Activated naive CD4-positive, alpha-beta T cell treated with anti-CD3 and anti-CD28 coated beads for 36 hours (primary cell): ENCODE measurements at regions of chr7 and their contacts with region 1.

Region 1: GRCh38 chr7:55515569-55516279 is 56.6 kb downstream of the VOPP1 start:
- DNase-seq: peak; percentile 56
- H3K4me3 Mint-ChIP-seq: peak overlapping the region; percentile 36
- H3K27ac Mint-ChIP-seq: peak overlapping the region; percentile 90
- H3K4me1 Mint-ChIP-seq: peaks cover 77% of the 10 kb centered on the region
- H3K27me3 Mint-ChIP-seq: no peaks in the 10 kb centered on the region

Region 2: DNA sequence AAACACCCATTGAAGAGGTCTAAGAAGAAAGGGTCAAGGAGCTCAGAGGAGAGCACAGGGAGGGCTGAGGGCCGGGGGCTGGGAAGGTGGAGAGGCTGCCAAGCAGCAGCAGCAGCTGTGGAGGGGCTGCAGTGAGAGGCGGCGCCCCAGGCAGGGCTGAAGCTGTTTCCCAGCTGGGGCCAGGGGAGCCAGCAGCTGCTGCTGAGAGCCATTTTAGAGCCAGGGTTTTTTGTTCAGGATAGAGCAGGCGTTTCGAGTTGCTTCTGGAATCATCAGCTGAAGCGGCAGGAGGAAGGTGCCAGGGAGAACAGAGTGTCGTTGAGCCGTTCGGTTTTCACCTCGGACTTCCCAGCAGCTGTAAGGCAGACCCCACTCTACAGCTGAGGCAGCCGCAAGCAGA is 87.9 kb before region 1 on chr7:
- CTCF ChIA-PET with region 1: no interaction called
- intact Hi-C with region 1: loop called (anchors 1 kb)
- DNase-seq: no peak
- H3K4me3 Mint-ChIP-seq: no peak overlapping the region
- H3K27ac Mint-ChIP-seq: peak overlapping the region; percentile 69
- H3K4me1 Mint-ChIP-seq: peaks cover 21% of the 10 kb centered on the region
- H3K27me3 Mint-ChIP-seq: no peaks in the 10 kb centered on the region

Region 3: DNA sequence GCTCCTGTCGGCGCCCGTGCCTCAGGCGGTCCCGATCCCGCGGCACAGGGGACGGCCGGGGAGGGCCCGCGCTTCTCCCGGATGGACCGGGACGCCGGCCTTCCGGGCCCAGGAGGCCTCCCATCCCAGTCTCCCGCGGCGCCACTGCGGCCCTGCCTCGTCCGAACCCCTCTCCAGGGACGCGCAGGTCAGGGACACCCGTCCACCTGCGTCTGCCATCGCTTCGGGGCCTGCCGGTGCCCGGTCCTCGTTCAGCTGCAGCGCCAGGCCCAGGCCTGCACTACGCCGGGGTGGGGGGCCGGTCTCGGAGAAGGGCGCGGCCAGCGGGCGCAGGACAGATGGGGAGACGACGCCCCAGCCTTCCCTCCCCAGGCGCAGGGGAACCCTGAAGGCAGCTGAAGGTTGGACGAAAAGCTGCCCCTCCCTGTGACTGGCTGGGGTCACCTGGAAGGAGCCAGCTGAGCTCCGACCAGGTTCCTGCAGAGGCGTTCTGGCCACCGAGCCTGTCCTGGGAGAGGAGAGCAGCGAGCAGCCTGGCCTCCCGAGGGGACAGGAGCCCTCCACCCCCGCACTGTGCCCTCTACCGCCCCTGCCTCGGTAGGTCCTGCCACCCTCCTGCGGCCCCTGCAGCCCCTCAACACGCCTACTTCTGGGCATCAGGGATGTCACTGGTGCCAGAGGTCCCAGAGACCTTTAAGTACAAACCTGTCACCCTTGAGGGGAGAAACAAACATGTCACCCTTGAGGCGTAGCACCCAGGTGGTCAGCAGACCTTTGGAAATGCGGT is 66.3 kb before region 1 on chr7:
- CTCF ChIA-PET with region 1: no interaction called
- intact Hi-C with region 1: no loop called
- DNase-seq: no peak
- H3K4me3 Mint-ChIP-seq: no peak overlapping the region
- H3K27ac Mint-ChIP-seq: no peak overlapping the region
- H3K4me1 Mint-ChIP-seq: peaks cover 22% of the 10 kb centered on the region
- H3K27me3 Mint-ChIP-seq: no peaks in the 10 kb centered on the region

Region 4: DNA sequence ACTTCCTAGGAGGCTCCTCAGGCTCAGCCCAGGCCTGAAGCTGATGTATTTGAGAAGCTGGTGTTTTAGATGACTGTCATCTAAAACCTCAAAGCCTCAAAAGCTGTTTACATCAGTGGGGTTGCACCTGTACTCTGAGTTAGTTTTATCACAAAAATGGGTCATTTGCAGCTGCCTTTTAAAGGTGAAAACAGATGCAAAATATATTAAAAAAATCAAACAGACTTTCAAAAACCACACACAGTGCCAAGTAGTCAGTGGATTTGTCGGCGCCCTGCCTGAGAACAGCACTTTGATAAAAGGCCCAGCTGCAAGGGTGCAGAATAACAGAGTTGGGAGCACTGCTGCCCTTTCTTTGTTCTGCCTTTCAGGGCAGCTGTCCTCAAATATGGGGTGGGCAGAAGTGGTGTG is 46.4 kb before region 1 on chr7:
- CTCF ChIA-PET with region 1: no interaction called
- intact Hi-C with region 1: loop called (anchors 1 kb)
- DNase-seq: peak; percentile 53
- H3K4me3 Mint-ChIP-seq: no peak overlapping the region
- H3K27ac Mint-ChIP-seq: peak overlapping the region; percentile 83
- H3K4me1 Mint-ChIP-seq: peaks cover 72% of the 10 kb centered on the region
- H3K27me3 Mint-ChIP-seq: no peaks in the 10 kb centered on the region

Region 5: GRCh38 chr7:55557666-55558188 is 42.0 kb after region 1 on chr7:
- CTCF ChIA-PET with region 1: no interaction called
- intact Hi-C with region 1: loop called (anchors 2 kb)
- DNase-seq: peak; percentile 39
- H3K4me3 Mint-ChIP-seq: no peak overlapping the region
- H3K27ac Mint-ChIP-seq: peak overlapping the region; percentile 50
- H3K4me1 Mint-ChIP-seq: peaks cover 90% of the 10 kb centered on the region
- H3K27me3 Mint-ChIP-seq: no peaks in the 10 kb centered on the region